ENCODE measurements at regions of chr2 and their contacts with region 1.

Region 1: GRCh38 chr2:229586746-229587705 is 127.3 kb downstream of the DNER start:
- DNase-seq: peak; percentile 60
- ATAC-seq: peak; percentile 99
- H3K4me3 ChIP-seq: no peak overlapping the region
- H3K27ac ChIP-seq: no peak overlapping the region
- H3K4me1 ChIP-seq: no peaks in the 10 kb centered on the region; the same call in 1 of the 2 replicates
- H3K27me3 ChIP-seq: no peaks in the 10 kb centered on the region
- CTCF ChIP-seq: peak; percentile 60
- POLR2A ChIP-seq: no peak
- RAD21 ChIP-seq: peak; percentile 69

Region 2: DNA sequence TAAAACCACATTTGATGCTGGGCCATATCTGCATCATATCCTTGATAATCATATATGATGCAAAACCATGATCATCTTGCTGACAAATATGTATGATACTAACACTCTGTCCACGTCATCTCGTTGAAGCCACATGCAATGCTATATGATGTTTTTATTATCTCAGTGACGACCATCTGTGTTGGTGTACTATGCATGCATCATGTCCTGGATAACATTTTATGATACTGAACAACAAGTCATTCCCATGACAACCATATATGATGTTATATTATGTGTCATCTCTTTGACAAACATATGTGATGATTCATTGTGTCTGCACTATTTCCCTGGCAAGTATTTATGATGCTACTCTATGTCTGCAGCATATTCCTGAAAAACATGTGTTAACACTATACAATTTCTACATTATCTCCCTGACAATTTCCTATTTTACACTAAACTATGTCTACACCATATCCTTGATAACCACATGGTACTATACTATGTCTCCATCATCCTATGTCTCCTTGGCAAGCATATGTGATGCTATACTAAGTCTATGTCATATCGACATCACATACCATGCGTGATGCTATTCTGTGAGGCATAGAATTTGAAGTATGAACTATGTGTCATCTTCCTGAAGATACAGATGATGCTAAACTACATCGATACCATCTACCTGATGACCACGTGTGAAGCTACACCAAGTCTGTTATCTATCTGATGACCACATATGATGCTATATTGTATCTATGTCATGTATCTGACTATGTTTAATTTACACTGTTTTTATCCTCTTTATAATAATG is 1678.6 kb before region 1 on chr2:
- CTCF ChIA-PET with region 1: no interaction called
- POLR2A ChIA-PET with region 1: no interaction called
- dilution Hi-C with region 1: no loop called
- in situ Hi-C with region 1: loop called (anchors 25 kb)
- intact Hi-C with region 1: no loop called
- DNase-seq: peak; percentile 46
- ATAC-seq: no peak
- H3K4me3 ChIP-seq: no peak overlapping the region
- H3K27ac ChIP-seq: no peak overlapping the region
- H3K4me1 ChIP-seq: no peaks in the 10 kb centered on the region
- H3K27me3 ChIP-seq: no peaks in the 10 kb centered on the region
- CTCF ChIP-seq: no peak
- POLR2A ChIP-seq: no peak
- RAD21 ChIP-seq: no peak

Region 3: DNA sequence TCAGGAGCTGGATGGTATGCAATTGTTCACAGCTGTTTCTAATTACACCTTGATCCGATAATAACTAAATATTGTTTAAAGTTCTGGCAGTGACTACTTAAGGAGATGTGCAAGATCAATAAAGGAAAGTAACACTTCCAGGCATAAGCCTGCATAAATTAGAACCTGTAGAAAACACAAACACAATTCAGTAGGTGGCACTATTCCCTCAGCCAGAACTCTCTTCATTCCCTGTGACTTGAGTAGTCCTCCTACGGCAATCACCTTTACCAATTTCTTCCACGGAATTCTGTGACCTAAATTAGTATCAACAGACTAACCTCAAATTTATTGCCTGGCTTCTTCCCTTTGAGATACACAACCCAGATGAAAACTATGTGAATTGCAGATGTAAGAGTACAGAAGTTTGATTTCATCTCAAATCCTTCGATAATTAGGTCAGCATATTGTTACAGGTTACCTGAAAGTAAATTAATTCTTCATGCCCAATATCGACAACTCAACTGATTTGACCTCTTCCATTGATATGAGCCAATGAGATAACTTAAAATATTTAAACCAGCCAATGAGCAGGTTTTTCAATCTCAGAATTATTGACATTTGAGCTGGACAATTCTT is 453.8 kb before region 1 on chr2:
- CTCF ChIA-PET with region 1: no interaction called
- POLR2A ChIA-PET with region 1: no interaction called
- dilution Hi-C with region 1: no loop called
- in situ Hi-C with region 1: no loop called
- intact Hi-C with region 1: loop called (anchors 1 kb)
- DNase-seq: peak; percentile 12
- ATAC-seq: no peak
- H3K4me3 ChIP-seq: no peak overlapping the region
- H3K27ac ChIP-seq: no peak overlapping the region
- H3K4me1 ChIP-seq: no peaks in the 10 kb centered on the region
- H3K27me3 ChIP-seq: no peaks in the 10 kb centered on the region
- CTCF ChIP-seq: peak; percentile 17; the same call in 1 of the 2 replicates
- POLR2A ChIP-seq: no peak
- RAD21 ChIP-seq: peak; percentile 26

Region 4: DNA sequence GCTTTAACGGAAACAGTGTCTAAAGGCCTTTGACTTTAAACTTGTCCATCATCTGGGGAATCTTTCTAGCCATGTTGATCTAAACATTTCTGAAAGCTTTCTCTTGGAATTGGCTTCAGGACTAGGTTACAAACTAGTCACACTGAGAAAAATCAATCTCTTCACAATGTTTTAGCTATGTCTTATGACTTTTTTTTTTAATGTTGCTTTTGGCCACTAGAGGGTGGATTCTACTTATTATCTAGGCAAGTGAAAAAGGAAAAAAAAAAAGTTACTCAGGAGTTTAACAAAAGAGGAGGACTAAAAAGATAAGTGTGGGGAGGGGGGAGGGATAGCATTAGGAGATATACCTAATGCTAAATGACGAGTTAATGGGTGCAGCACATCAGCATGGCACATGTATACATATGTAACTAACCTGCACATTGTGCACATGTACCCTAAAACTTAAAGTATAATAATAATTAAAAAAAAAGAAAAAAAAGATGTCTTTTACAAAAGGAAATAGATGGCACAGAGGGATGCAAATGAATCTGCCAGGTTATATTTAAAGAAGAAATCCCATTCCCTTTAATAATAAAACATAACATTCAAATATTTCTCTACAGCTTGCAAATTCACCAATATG is 155.6 kb before region 1 on chr2:
- CTCF ChIA-PET with region 1: no interaction called
- POLR2A ChIA-PET with region 1: no interaction called
- dilution Hi-C with region 1: no loop called
- in situ Hi-C with region 1: loop called (anchors 5 kb)
- intact Hi-C with region 1: loop called (anchors 1 kb)
- DNase-seq: peak; percentile 57
- ATAC-seq: no peak
- H3K4me3 ChIP-seq: no peak overlapping the region
- H3K27ac ChIP-seq: no peak overlapping the region
- H3K4me1 ChIP-seq: no peaks in the 10 kb centered on the region
- H3K27me3 ChIP-seq: no peaks in the 10 kb centered on the region
- CTCF ChIP-seq: peak; percentile 47
- POLR2A ChIP-seq: no peak
- RAD21 ChIP-seq: peak; percentile 39

Region 5: GRCh38 chr2:229530434-229530833 is 56.6 kb before region 1 on chr2:
- CTCF ChIA-PET with region 1: no interaction called
- POLR2A ChIA-PET with region 1: no interaction called
- dilution Hi-C with region 1: no loop called
- in situ Hi-C with region 1: no loop called
- intact Hi-C with region 1: no loop called
- DNase-seq: no peak
- ATAC-seq: no peak
- H3K4me3 ChIP-seq: no peak overlapping the region
- H3K27ac ChIP-seq: no peak overlapping the region
- H3K4me1 ChIP-seq: no peaks in the 10 kb centered on the region
- H3K27me3 ChIP-seq: no peaks in the 10 kb centered on the region
- CTCF ChIP-seq: no peak
- POLR2A ChIP-seq: no peak
- RAD21 ChIP-seq: no peak

Measured in IMR-90 (cell line).